B cell (primary cell): ENCODE measurements at regions of chr1 and their contacts with region 1.

Region 1: GRCh38 chr1:63575340-63575826 is 17.8 kb upstream of the PGM1 start:
- DNase-seq: peak; percentile 46
- ATAC-seq: peak; percentile 33
- H3K4me3 ChIP-seq: no peak overlapping the region
- H3K4me3 Mint-ChIP-seq: no peak overlapping the region
- H3K27ac ChIP-seq: no peak overlapping the region
- H3K27ac Mint-ChIP-seq: no peak overlapping the region
- H3K4me1 ChIP-seq: no peaks in the 10 kb centered on the region
- H3K4me1 Mint-ChIP-seq: no peaks in the 10 kb centered on the region
- H3K27me3 ChIP-seq: no peaks in the 10 kb centered on the region
- H3K27me3 Mint-ChIP-seq: no peaks in the 10 kb centered on the region
- CTCF ChIP-seq: peak; percentile 94

Region 2: GRCh38 chr1:63557365-63557987 is 17.9 kb before region 1 on chr1:
- CTCF ChIA-PET with region 1: interaction called, 27 read pairs
- POLR2A ChIA-PET with region 1: no interaction called
- intact Hi-C with region 1: no loop called
- DNase-seq: peak; percentile 11
- ATAC-seq: no peak
- H3K4me3 ChIP-seq: no peak overlapping the region
- H3K4me3 Mint-ChIP-seq: no peak overlapping the region
- H3K27ac ChIP-seq: no peak overlapping the region
- H3K27ac Mint-ChIP-seq: no peak overlapping the region
- H3K4me1 ChIP-seq: no peaks in the 10 kb centered on the region
- H3K4me1 Mint-ChIP-seq: no peaks in the 10 kb centered on the region
- H3K27me3 ChIP-seq: no peaks in the 10 kb centered on the region
- H3K27me3 Mint-ChIP-seq: no peaks in the 10 kb centered on the region
- CTCF ChIP-seq: peak; percentile 31

Region 3: DNA sequence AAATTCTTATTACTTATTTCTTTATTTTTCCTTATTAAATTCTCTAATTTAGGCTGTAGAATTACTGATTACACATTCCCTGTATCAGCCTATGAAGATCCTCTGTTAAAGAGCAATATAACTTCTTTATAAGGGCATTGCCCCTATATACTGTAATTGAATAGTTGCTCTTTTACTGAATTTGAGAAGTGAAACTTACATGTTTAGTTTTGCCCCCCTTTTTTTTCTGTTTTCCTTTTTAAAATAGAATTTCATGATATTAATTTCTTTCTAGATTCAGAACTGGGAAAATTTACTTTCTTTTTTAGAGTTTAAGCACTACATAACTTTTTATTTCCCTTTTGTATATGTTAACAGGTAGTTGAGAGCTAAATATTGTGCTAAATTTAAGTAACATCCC is 11.6 kb before region 1 on chr1:
- CTCF ChIA-PET with region 1: interaction called, 27 read pairs
- POLR2A ChIA-PET with region 1: no interaction called
- intact Hi-C with region 1: no loop called
- DNase-seq: no peak
- ATAC-seq: no peak
- H3K4me3 ChIP-seq: no peak overlapping the region
- H3K4me3 Mint-ChIP-seq: no peak overlapping the region
- H3K27ac ChIP-seq: no peak overlapping the region
- H3K27ac Mint-ChIP-seq: no peak overlapping the region
- H3K4me1 ChIP-seq: no peaks in the 10 kb centered on the region
- H3K4me1 Mint-ChIP-seq: no peaks in the 10 kb centered on the region
- H3K27me3 ChIP-seq: no peaks in the 10 kb centered on the region
- H3K27me3 Mint-ChIP-seq: no peaks in the 10 kb centered on the region
- CTCF ChIP-seq: no peak

Region 4: GRCh38 chr1:63593303-63593885 is 18.0 kb after region 1 on chr1 and contains the start of gene PGM1:
- CTCF ChIA-PET with region 1: interaction called, 16 read pairs
- POLR2A ChIA-PET with region 1: no interaction called
- intact Hi-C with region 1: no loop called
- DNase-seq: peak; percentile 81
- ATAC-seq: peak; percentile 81
- H3K4me3 ChIP-seq: peak within 1 kb of the TSS; percentile 32 to 92 (median 80)
- H3K4me3 Mint-ChIP-seq: peak within 1 kb of the TSS; percentile 98
- H3K27ac ChIP-seq: peak within 1 kb of the TSS; percentile 78 to 88
- H3K27ac Mint-ChIP-seq: peak within 1 kb of the TSS; percentile 98
- H3K4me1 ChIP-seq: peaks cover 6 to 9% of the 10 kb centered on the region in 2 donors
- H3K4me1 Mint-ChIP-seq: peaks cover 13% of the 10 kb centered on the region
- H3K27me3 ChIP-seq: no peaks in the 10 kb centered on the region
- H3K27me3 Mint-ChIP-seq: no peaks in the 10 kb centered on the region
- CTCF ChIP-seq: no peak
- total RNA-seq, gene PGM1: 13.2 and 17.3 TPM in 2 replicates

Region 5: GRCh38 chr1:63615768-63616420 is 40.5 kb after region 1 on chr1:
- CTCF ChIA-PET with region 1: interaction called, 3 read pairs
- POLR2A ChIA-PET with region 1: no interaction called
- intact Hi-C with region 1: loop called (anchors 2 kb)
- DNase-seq: peak; percentile 80
- ATAC-seq: peak; percentile 71
- H3K4me3 ChIP-seq: no peak overlapping the region
- H3K4me3 Mint-ChIP-seq: no peak overlapping the region
- H3K27ac ChIP-seq: no peak overlapping the region
- H3K27ac Mint-ChIP-seq: no peak overlapping the region
- H3K4me1 ChIP-seq: no peaks in the 10 kb centered on the region
- H3K4me1 Mint-ChIP-seq: no peaks in the 10 kb centered on the region
- H3K27me3 ChIP-seq: no peaks in the 10 kb centered on the region
- H3K27me3 Mint-ChIP-seq: no peaks in the 10 kb centered on the region
- CTCF ChIP-seq: peak; percentile 91